KBM-7 (cell line): ENCODE measurements at regions of chr11 and their contacts with region 1.

Region 1: DNA sequence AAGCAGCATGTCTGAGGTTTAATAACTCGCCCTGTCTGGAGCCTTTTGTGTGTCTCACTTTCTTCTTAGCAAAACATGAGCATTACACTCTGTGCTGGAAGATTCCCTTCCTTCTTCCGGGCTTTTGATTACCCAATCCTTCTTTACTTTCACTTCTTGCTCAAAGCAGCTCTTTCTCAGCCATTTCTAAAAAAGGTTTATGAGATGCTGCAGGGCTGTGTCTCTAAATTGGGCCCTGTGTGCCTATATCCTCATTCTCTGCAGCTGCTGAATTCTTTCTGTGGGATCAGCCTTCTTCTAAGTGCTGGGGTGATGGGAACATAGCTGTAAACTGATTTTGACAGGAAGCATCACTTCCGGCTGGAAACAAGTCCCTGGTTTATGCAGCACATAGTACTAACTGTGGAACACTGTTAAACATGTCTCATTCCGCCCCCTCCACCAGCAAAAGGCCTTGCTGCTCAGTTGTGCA is 71.8 kb downstream of the PIWIL4 start:
- DNase-seq: peak; percentile 53

Region 2: GRCh38 chr11:94767761-94768601 is 129.0 kb after region 1 on chr11 and contains the start of gene AMOTL1:
- in situ Hi-C with region 1: loop called (anchors 25 kb)
- DNase-seq: peak; percentile 97